WTC11 (cell line): ENCODE measurements at regions of chr19 and their contacts with region 1.

Region 1: DNA sequence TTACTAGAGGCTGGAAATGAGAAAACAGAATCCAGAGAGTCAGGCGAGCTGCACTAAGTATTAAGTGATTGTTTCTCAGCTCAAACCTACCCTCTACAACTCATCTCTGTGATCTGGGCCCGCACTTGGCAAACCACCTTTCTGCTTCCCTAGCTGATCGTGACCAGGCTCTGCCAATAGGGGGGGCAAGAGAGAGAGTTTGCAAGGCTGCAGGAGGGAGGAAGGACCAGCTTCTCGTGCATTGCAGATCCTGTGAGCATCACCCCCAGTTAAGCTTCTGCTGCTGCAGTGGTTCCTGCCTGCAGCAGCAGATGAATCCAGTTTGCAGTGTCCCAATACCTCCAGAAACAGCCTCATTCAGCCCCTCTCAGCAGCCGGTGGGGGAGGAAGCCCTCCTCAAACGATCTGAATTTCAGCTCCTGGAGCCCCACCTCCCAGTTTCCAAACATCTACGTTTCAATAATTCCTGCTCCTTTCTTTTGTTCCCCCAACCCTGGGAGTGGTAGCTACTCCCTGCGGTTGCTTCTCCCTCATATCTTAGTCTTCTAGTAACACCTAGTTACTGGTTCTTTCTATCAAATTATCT is 20.0 kb downstream of the XRCC1 start:
- DNase-seq: peak; percentile 92
- ATAC-seq: peak; percentile 98
- H3K4me3 Mint-ChIP-seq: no peak overlapping the region
- H3K27ac Mint-ChIP-seq: peak overlapping the region; percentile 84
- H3K4me1 Mint-ChIP-seq: peaks cover 7% of the 10 kb centered on the region
- H3K27me3 Mint-ChIP-seq: no peaks in the 10 kb centered on the region
- CTCF ChIP-seq: peak; percentile 64

Region 2: GRCh38 chr19:43446746-43447489 is 108.4 kb before region 1 on chr19:
- CTCF ChIA-PET with region 1: interaction called, 19 read pairs
- POLR2A ChIA-PET with region 1: no interaction called
- DNase-seq: peak; percentile 84
- ATAC-seq: peak; percentile 92
- H3K4me3 Mint-ChIP-seq: peak overlapping the region; percentile 34; the same call in 1 of the 2 replicates
- H3K27ac Mint-ChIP-seq: 0 out of 2 replicates have a peak overlapping the region, but pooled peaks have one; percentile 5
- H3K4me1 Mint-ChIP-seq: peaks cover 10% of the 10 kb centered on the region
- H3K27me3 Mint-ChIP-seq: peaks cover 7% of the 10 kb centered on the region; the same call in 1 of the 2 replicates
- CTCF ChIP-seq: peak; percentile 91

Region 3: DNA sequence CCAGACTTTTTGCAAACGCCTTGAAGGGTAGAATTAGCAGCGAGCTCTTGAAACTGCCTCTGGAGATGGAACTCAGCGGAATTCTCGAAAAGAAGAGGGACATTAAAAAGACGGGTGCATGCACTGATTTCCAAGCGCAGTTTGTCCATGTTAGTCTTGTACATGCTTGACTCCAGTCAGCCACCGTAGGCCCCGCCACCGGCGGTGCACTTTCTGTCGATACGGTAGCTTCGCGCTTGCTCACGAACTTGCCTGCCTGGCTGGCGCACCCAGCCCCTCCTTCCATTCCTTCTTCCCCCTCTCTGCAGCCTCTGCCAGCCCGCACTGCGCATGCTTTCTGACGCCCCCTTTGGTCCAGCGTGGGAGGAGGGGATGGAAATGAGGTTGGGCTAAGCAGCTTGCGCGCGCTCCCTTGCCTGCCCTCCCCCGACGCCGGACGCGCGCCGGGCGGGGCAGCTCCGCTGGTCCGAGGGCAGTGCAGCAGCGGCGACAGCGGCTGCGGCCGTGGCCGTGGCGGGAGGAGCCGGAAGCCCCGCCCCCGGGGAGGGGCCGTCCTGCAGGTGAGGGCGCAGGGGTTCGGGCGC is 22.2 kb before region 1 on chr19 and contains the start of gene ZNF575:
- CTCF ChIA-PET with region 1: interaction called, 152 read pairs
- POLR2A ChIA-PET with region 1: interaction called, 8 read pairs
- DNase-seq: peak; percentile 96
- ATAC-seq: peak; percentile 68
- H3K4me3 Mint-ChIP-seq: peak within 1 kb of the TSS; percentile 95
- H3K27ac Mint-ChIP-seq: peak within 1 kb of the TSS; percentile 100
- H3K4me1 Mint-ChIP-seq: peaks cover 18% of the 10 kb centered on the region
- H3K27me3 Mint-ChIP-seq: peaks cover 25% of the 10 kb centered on the region
- CTCF ChIP-seq: peak; percentile 16; the same call in 1 of the 2 replicates
- total RNA-seq, gene ZNF575: 0.13 to 0.25 TPM in 2 of 3 replicates, not detected in the other

Region 4: DNA sequence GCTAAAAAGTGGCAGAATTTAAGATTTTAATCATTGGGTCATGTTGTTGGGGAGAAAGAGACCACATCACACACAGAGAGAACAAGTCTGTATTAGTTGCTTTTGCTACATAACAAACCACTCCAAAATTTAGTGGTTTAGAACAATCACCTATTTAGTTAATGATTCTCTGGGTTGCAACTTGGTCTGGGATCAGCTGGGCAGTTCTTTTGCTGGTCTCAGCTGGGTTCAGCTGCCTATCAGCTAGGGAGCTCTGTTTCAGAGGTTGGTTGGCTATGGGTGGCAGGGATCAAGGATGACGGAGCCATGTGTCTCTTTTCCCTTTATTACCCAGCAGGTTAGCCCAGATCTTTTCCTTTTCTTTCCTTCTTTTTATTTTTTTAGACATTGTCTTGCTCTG is 29.2 kb after region 1 on chr19:
- CTCF ChIA-PET with region 1: interaction called, 17 read pairs
- POLR2A ChIA-PET with region 1: no interaction called
- DNase-seq: no peak
- ATAC-seq: no peak
- H3K4me3 Mint-ChIP-seq: no peak overlapping the region
- H3K27ac Mint-ChIP-seq: peak overlapping the region; percentile 66; the same call in 1 of the 2 replicates
- H3K4me1 Mint-ChIP-seq: peaks cover 20% of the 10 kb centered on the region
- H3K27me3 Mint-ChIP-seq: no peaks in the 10 kb centered on the region; the same call in 1 of the 2 replicates
- CTCF ChIP-seq: no peak

Region 5: DNA sequence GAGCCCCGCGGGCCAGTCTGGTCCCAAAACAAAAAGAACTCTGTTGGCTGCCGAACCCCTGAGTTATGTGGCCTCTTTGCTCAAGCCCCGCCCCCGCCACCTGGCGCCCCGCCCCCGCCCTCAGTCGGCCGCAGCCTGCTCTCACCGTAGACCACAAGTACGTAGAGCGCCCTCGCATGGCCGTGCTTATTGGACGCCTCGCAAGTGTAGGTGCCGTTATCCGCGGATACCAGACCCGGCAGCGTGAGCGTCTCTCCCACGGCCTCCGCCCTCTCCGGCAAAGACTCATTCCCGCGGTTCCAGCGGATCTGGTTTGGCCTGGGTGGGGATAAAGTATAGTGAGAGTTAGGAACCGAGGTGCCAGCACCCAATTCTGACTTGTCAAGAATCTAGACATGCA is 69.7 kb after region 1 on chr19:
- CTCF ChIA-PET with region 1: interaction called, 11 read pairs
- POLR2A ChIA-PET with region 1: no interaction called
- DNase-seq: peak; percentile 98
- ATAC-seq: peak; percentile 82
- H3K4me3 Mint-ChIP-seq: peak overlapping the region; percentile 47
- H3K27ac Mint-ChIP-seq: peak overlapping the region; percentile 97
- H3K4me1 Mint-ChIP-seq: peaks cover 26% of the 10 kb centered on the region
- H3K27me3 Mint-ChIP-seq: peaks cover 34% of the 10 kb centered on the region
- CTCF ChIP-seq: no peak

Region 6: GRCh38 chr19:43668406-43669158 is 113.3 kb after region 1 on chr19:
- CTCF ChIA-PET with region 1: interaction called, 25 read pairs
- POLR2A ChIA-PET with region 1: no interaction called
- DNase-seq: peak; percentile 99
- ATAC-seq: peak; percentile 89
- H3K4me3 Mint-ChIP-seq: peak overlapping the region; percentile 89
- H3K27ac Mint-ChIP-seq: peak overlapping the region; percentile 91
- H3K4me1 Mint-ChIP-seq: peaks cover 31% of the 10 kb centered on the region
- H3K27me3 Mint-ChIP-seq: peaks cover 31% of the 10 kb centered on the region
- CTCF ChIP-seq: no peak